ENCODE measurements at regions of chr2 and their contacts with region 1.

Region 1: DNA sequence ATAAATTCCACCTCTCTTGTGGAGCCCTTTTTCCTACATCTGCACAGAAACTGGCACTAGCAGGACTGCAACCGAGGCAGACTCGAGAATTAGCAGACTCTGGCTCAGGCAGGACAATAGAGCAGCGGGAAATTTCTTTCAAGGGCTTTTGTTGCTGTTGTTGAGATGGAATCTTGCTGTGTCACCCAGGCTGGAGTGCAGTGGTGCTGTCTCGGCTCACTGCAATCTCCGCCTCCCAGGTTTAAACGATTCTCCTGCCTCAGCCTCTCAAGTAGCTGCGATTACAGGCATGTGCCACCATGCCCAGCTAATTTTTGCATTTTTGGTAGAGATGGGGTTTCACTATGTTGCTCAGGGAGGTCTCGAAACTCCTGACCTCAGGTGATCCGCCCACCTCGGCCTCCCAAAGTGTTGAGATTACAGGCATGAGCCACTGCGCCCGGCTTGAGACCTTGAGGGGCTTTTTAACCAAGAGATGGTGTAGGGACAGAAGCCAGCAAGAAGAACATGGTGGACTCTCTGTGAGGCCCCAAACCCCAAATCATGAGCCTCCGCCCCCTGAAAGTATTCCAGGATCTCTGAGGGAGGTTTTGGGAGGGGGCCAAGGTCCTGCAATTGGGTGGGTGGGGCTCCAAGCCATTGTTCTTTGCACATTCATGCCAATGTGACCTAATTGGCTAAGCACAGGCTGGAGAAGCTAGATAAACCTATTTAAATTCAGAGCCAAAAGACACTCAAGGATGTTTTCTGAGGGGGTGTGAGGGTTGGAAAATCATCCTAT is 68.4 kb upstream of the MSH2 start:
- DNase-seq: no peak
- ATAC-seq: no peak
- H3K4me3 ChIP-seq: no peak overlapping the region
- H3K4me3 Mint-ChIP-seq: no peak overlapping the region
- H3K27ac ChIP-seq: no peak overlapping the region
- H3K27ac Mint-ChIP-seq: no peak overlapping the region
- H3K4me1 ChIP-seq: no peaks in the 10 kb centered on the region
- H3K4me1 Mint-ChIP-seq: no peaks in the 10 kb centered on the region
- H3K27me3 ChIP-seq: peaks cover 0 to 5% of the 10 kb centered on the region in 2 experiments
- H3K27me3 Mint-ChIP-seq: peaks cover 4% of the 10 kb centered on the region
- CTCF ChIP-seq: no peak

Region 2: DNA sequence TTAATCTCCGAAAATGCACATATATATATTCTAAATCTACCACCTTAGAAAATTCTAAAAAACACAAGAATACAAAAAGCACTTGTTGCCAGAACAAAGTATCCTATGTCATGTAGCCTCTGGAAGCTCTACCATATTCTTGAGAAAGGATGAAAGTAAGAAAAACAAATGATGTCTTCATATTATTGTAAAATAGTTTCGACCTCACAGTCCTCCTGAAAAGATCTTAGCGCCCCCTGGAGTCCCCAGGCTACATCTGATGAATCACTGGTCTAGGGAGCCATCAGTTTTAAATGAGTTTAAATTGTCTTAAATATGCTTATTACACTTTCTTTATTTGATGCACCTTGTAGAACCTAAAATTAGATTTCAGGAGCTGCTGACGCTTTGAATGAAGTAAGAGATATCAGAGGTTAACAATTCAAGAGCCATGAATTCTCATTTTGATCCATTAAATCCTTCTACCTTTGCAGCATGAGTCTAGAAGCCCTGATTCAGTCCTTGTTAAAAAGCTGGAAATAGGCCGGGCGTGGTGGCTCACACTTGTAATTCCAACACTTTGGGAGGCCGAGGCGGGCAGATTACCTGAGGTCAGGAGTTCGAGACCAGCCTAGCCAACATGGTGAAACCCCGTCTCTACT is 557.7 kb before region 1 on chr2:
- CTCF ChIA-PET with region 1: no interaction called
- POLR2A ChIA-PET with region 1: no interaction called
- intact Hi-C with region 1: no loop called
- DNase-seq: peak in 12 of 14 experiments; percentile 17 to 59 (median 32)
- ATAC-seq: no peak
- H3K4me3 ChIP-seq: no peak overlapping the region
- H3K4me3 Mint-ChIP-seq: no peak overlapping the region
- H3K27ac ChIP-seq: no peak overlapping the region
- H3K27ac Mint-ChIP-seq: no peak overlapping the region
- H3K4me1 ChIP-seq: no peaks in the 10 kb centered on the region
- H3K4me1 Mint-ChIP-seq: no peaks in the 10 kb centered on the region
- H3K27me3 ChIP-seq: peaks cover 0 to 5% of the 10 kb centered on the region in 2 experiments
- H3K27me3 Mint-ChIP-seq: peaks cover 5% of the 10 kb centered on the region
- CTCF ChIP-seq: peak; percentile 70

Region 3: GRCh38 chr2:47145466-47145865 is 189.1 kb before region 1 on chr2:
- CTCF ChIA-PET with region 1: no interaction called
- POLR2A ChIA-PET with region 1: no interaction called
- intact Hi-C with region 1: no loop called
- DNase-seq: no peak
- ATAC-seq: no peak
- H3K4me3 ChIP-seq: no peak overlapping the region
- H3K4me3 Mint-ChIP-seq: no peak overlapping the region
- H3K27ac ChIP-seq: no peak overlapping the region
- H3K27ac Mint-ChIP-seq: no peak overlapping the region
- H3K4me1 ChIP-seq: no peaks in the 10 kb centered on the region
- H3K4me1 Mint-ChIP-seq: no peaks in the 10 kb centered on the region
- H3K27me3 ChIP-seq: no peaks in the 10 kb centered on the region
- H3K27me3 Mint-ChIP-seq: no peaks in the 10 kb centered on the region
- CTCF ChIP-seq: no peak

Region 4: GRCh38 chr2:47388888-47389287 is 54.3 kb after region 1 on chr2:
- CTCF ChIA-PET with region 1: interaction called, 4 read pairs
- POLR2A ChIA-PET with region 1: interaction called, 3 read pairs
- intact Hi-C with region 1: loop called in 1 of 2 experiments (anchors 2 kb)
- DNase-seq: no peak
- ATAC-seq: no peak
- H3K4me3 ChIP-seq: no peak overlapping the region
- H3K4me3 Mint-ChIP-seq: no peak overlapping the region
- H3K27ac ChIP-seq: no peak overlapping the region
- H3K27ac Mint-ChIP-seq: no peak overlapping the region
- H3K4me1 ChIP-seq: peaks cover 2% of the 10 kb centered on the region
- H3K4me1 Mint-ChIP-seq: no peaks in the 10 kb centered on the region
- H3K27me3 ChIP-seq: no peaks in the 10 kb centered on the region
- H3K27me3 Mint-ChIP-seq: peaks cover 17% of the 10 kb centered on the region
- CTCF ChIP-seq: no peak